ENCODE measurements at regions of chr5 and their contacts with region 1.

Region 1: GRCh38 chr5:170267431-170268152 is 30.0 kb downstream of the LCP2 start:
- DNase-seq: peak; percentile 91
- ATAC-seq: peak; percentile 50
- H3K4me3 Mint-ChIP-seq: peak overlapping the region; percentile 34
- H3K27ac Mint-ChIP-seq: peak overlapping the region; percentile 86
- H3K4me1 Mint-ChIP-seq: peaks cover 93% of the 10 kb centered on the region
- H3K27me3 Mint-ChIP-seq: no peaks in the 10 kb centered on the region

Region 2: DNA sequence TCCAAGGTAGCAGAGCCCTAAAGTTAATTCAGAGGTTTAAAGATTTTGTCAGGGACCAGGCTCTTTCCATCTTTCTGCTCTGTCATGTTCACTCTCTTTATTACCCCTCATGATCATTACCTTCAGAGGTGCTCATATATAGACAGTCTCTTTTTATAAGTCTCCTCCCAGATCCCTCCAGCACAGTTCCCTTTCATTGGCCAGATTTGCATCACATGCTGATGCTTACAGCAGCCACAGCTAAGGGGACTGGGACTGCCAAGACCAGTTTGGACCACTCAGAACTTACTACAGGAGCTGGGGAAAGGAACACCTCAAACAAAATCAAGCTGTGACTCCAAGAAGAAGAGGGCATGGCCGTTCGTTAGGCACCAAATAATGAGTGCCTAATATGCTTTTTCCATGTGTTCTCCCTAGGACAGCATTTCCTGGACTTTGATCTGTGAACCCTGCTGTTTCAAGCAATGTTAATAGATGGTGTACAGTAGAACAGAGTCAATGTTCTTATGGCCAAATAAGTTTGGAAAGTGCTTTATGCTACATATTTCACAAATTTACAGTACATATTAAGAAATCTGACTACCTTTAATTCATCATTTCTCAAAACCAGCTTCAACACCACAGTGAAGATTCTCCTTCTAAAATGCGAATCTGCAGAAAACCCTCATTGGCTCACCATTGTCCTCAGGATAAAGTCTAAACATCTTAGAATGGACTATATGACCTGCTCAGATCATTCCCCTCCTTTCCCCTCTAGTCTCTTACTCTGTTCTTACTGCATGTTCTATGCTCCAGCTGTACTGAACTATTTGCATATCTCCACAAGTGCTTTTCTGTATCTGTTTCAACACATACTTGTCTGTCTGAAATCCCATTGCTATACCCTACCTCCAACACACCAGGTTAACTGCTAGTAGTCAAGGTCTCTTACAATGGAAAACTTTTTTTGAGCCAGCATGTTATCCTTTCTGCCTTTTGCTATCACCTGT is 31.4 kb before region 1 on chr5:
- CTCF ChIA-PET with region 1: interaction called, 10 read pairs
- POLR2A ChIA-PET with region 1: no interaction called
- intact Hi-C with region 1: no loop called
- DNase-seq: no peak
- ATAC-seq: no peak
- H3K4me3 Mint-ChIP-seq: no peak overlapping the region
- H3K27ac Mint-ChIP-seq: no peak overlapping the region
- H3K4me1 Mint-ChIP-seq: peaks cover 14% of the 10 kb centered on the region
- H3K27me3 Mint-ChIP-seq: no peaks in the 10 kb centered on the region

Region 3: DNA sequence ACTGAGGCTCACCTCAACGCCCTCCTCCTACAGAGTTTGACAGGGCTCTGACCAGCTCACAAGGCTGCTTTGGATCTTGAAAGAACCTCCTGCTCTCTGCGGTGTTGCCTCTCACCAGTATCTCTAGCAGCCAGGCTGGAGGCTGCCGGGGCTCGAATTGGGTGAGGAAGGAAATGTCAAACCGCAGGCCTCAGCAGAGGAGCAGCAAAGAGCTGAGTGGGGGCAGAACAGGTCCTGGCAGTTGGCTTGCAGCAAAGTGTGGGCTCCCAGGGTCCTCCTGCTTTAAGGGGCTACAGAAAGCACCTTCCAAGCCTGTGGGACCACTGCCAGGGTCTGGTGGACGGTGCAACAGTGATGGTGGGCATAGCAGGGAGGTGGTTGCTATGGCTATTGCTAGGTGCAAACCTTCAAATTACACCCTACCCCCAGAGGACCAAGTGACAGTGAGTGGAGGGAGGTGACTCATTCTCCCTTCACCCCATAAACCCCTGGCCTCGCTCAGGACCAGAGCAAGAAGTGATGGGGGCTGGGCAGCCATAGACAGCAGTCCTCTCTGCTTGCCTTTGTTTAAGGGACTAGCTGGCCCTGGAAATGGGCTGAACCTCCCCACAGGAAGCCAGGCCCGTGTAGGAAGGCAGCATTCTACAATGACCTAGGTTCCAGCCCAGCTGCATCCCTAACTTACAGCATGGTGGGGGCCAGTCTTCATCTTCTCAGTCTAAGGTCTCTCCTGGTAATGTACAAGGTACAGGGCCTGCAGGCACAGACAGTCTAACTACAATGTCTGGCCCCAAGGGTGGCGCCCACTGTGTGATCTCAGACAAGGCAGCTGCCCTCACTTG is 11.2 kb after region 1 on chr5:
- CTCF ChIA-PET with region 1: interaction called, 21 read pairs
- POLR2A ChIA-PET with region 1: no interaction called
- intact Hi-C with region 1: loop called in 1 of 2 experiments (anchors 1 kb)
- DNase-seq: peak; percentile 93
- ATAC-seq: peak; percentile 73
- H3K4me3 Mint-ChIP-seq: peak overlapping the region; percentile 48
- H3K27ac Mint-ChIP-seq: peak overlapping the region; percentile 90
- H3K4me1 Mint-ChIP-seq: peaks cover 97% of the 10 kb centered on the region
- H3K27me3 Mint-ChIP-seq: no peaks in the 10 kb centered on the region

Region 4: DNA sequence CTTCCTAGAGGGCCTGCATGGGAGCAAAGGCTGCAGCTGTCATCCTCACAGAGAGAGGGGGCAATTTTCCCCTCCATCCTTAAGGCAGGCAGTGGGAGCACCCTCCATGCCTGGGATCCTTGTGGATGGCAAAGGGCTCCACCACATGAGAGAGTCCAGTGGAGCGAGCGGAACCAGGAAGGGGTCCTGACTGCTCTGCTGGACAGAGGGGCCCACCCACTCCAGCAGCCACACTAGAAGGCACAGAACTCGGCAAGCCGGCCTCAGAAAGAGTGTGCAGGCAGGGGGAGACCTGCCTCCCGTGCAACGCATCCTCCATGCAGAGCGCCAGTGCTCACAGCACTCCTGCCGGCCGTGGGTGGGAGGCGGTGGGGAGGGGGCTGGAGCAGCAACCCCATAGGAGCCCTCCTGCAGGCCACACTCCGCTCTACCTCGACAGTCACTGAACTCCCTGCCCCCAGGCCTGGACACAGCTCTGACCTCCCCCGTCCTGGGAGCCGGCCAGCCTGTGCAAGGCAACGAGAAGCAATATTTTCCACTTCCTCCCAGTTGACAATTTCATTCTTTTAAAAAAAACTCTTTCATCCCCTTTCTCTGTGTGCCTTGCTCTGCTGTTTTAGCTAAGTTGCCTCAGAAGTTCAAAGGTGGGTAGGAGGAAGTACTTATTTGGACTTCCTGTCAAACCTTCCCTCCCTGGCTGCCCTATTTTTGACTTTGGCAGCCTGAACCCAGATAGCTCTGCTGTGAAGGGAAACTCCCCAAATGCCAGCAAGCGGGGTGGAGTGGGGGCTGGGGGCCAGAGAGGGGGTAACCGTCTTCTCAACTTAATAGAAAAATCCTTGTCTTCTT is 35.3 kb after region 1 on chr5:
- CTCF ChIA-PET with region 1: interaction called, 180 read pairs
- POLR2A ChIA-PET with region 1: interaction called, 6 read pairs
- intact Hi-C with region 1: loop called in 1 of 2 experiments (anchors 5 kb)
- DNase-seq: peak; percentile 75
- ATAC-seq: peak; percentile 87
- H3K4me3 Mint-ChIP-seq: peak overlapping the region; percentile 70
- H3K27ac Mint-ChIP-seq: peak overlapping the region; percentile 92
- H3K4me1 Mint-ChIP-seq: peaks cover 91% of the 10 kb centered on the region
- H3K27me3 Mint-ChIP-seq: no peaks in the 10 kb centered on the region

Region 5: GRCh38 chr5:170571875-170572852 is 304.6 kb after region 1 on chr5:
- CTCF ChIA-PET with region 1: no interaction called
- POLR2A ChIA-PET with region 1: no interaction called
- intact Hi-C with region 1: loop called in 1 of 2 experiments (anchors 1 kb)
- DNase-seq: peak; percentile 90
- ATAC-seq: peak; percentile 97
- H3K4me3 Mint-ChIP-seq: no peak overlapping the region
- H3K27ac Mint-ChIP-seq: no peak overlapping the region
- H3K4me1 Mint-ChIP-seq: peaks cover 20% of the 10 kb centered on the region
- H3K27me3 Mint-ChIP-seq: peaks cover 62% of the 10 kb centered on the region

Measured in activated CD4-positive, alpha-beta T cell treated with anti-CD3 and anti-CD28 coated beads for 36 hours (primary cell).